Tibial artery (tissue), 4 donors: ENCODE measurements at regions of chr19 and their contacts with region 1.

Region 1: GRCh38 chr19:17766543-17767131 is 15.4 kb downstream of the FCHO1 start:
- DNase-seq: peak; percentile 70 to 85
- H3K4me3 ChIP-seq: no peak overlapping the region
- H3K27ac ChIP-seq: no peak overlapping the region
- H3K4me1 ChIP-seq: peaks cover 0 to 8% (median 6%) of the 10 kb centered on the region in 4 donors
- H3K27me3 ChIP-seq: peaks cover 0 to 27% of the 10 kb centered on the region in 2 donors
- CTCF ChIP-seq: peak; percentile 71 to 80

Region 2: GRCh38 chr19:17605761-17606745 is 160.6 kb before region 1 on chr19:
- intact Hi-C with region 1: loop called (anchors 5 kb)
- DNase-seq: peak; percentile 72 to 83
- H3K4me3 ChIP-seq: peak overlapping the region; percentile 32 to 44
- H3K27ac ChIP-seq: no peak overlapping the region
- H3K4me1 ChIP-seq: peaks cover 9 to 14% (median 11%) of the 10 kb centered on the region in 4 donors
- H3K27me3 ChIP-seq: peaks cover 0 to 66% of the 10 kb centered on the region in 2 donors
- CTCF ChIP-seq: peak; percentile 71 to 80